PC-3 (cell line): ENCODE measurements at regions of chr1 and their contacts with region 1.

Region 1: DNA sequence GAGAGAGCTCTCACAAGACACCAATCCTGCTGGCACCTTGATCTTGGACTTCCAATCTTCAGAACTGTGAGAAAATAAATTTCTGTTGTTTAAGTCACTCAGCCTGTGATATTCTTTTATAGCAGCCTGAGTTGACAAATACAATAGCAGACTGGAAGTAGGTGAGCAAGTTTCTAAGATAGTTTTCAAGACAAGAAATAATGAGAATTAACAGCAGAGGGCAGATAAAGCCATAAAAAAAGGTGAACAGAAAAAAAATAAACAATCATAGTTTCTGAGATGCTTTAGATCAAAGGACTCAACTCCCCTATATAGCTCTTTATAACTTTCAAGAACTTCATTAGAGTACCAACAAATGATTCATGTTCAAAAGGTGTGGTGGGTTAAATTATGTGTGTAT is 119.8 kb downstream of the PLPPR5 start:
- DNase-seq: peak; percentile 54
- ATAC-seq: peak; percentile 42
- H3K4me3 ChIP-seq: no peak overlapping the region
- H3K27ac ChIP-seq: no peak overlapping the region
- H3K4me1 ChIP-seq: peaks cover 4% of the 10 kb centered on the region; the same call in 1 of the 2 replicates
- H3K27me3 ChIP-seq: no peaks in the 10 kb centered on the region
- CTCF ChIP-seq: peak; percentile 60

Region 2: GRCh38 chr1:98794196-98794886 is 90.5 kb before region 1 on chr1:
- CTCF ChIA-PET with region 1: interaction called, 6 read pairs
- POLR2A ChIA-PET with region 1: no interaction called
- intact Hi-C with region 1: loop called (anchors 2 kb)
- DNase-seq: peak; percentile 88
- ATAC-seq: peak; percentile 68
- H3K4me3 ChIP-seq: no peak overlapping the region
- H3K27ac ChIP-seq: no peak overlapping the region
- H3K4me1 ChIP-seq: peaks cover 32% of the 10 kb centered on the region
- H3K27me3 ChIP-seq: no peaks in the 10 kb centered on the region
- CTCF ChIP-seq: peak; percentile 91

Region 3: DNA sequence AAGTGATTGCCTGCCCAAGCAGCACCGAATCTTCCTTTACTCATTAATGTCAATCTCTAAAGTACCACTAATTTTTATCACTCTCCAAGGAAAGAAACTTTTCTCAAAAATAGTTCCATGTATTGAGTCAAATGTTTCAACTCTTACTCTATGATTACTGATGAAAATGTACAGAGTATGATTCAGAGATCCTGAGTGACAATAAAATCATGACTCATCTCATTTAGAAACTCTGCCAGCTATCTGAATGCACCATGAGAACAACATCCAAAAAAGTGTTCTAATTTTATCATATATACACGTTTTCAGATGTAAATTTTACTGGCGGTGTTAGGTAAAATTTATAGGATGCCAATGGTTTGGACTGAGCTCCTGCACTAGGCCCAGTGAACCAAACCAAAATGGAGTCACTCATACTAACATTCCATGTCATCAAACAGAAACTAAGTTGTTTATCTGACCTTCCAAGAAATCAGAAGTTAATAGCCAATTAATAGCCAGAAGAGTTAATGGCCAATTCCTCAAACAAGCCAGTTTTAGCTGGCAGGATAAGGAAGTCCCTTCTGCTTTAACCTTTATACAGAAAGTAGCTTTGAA is 97.2 kb after region 1 on chr1:
- CTCF ChIA-PET with region 1: no interaction called
- POLR2A ChIA-PET with region 1: no interaction called
- intact Hi-C with region 1: loop called (anchors 5 kb)
- DNase-seq: peak; percentile 89
- ATAC-seq: peak; percentile 87
- H3K4me3 ChIP-seq: no peak overlapping the region
- H3K27ac ChIP-seq: peak overlapping the region; percentile 76
- H3K4me1 ChIP-seq: peaks cover 22% of the 10 kb centered on the region
- H3K27me3 ChIP-seq: no peaks in the 10 kb centered on the region
- CTCF ChIP-seq: no peak

Region 4: DNA sequence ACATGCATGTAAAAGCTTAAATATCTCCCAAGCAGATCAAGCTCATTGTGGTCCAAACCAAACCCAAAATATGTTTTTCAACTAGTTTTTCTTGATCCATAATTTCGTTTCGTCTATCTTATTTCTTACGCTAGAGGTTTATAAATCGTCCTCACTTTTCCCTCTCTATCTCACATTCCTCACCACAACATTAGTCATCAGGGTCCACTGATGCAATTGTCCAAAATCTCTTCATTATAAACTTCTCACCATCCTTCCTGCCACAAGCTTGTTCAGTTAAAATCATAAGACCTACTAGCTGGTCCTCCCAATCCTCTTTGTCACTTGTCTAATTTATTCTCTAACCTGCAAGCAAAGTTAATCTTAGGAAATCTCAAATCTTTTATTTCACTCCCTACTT is 588.0 kb after region 1 on chr1:
- CTCF ChIA-PET with region 1: interaction called, 4 read pairs
- POLR2A ChIA-PET with region 1: no interaction called
- intact Hi-C with region 1: loop called (anchors 10 kb)
- DNase-seq: no peak
- ATAC-seq: no peak
- H3K4me3 ChIP-seq: no peak overlapping the region
- H3K27ac ChIP-seq: no peak overlapping the region
- H3K4me1 ChIP-seq: no peaks in the 10 kb centered on the region
- H3K27me3 ChIP-seq: no peaks in the 10 kb centered on the region
- CTCF ChIP-seq: no peak

Region 5: GRCh38 chr1:99707535-99708142 is 822.8 kb after region 1 on chr1:
- CTCF ChIA-PET with region 1: no interaction called
- POLR2A ChIA-PET with region 1: no interaction called
- intact Hi-C with region 1: loop called (anchors 2 kb)
- DNase-seq: peak; percentile 81
- ATAC-seq: peak; percentile 77
- H3K4me3 ChIP-seq: no peak overlapping the region
- H3K27ac ChIP-seq: no peak overlapping the region
- H3K4me1 ChIP-seq: no peaks in the 10 kb centered on the region
- H3K27me3 ChIP-seq: no peaks in the 10 kb centered on the region
- CTCF ChIP-seq: peak; percentile 96